ENCODE measurements at regions of chr7 and their contacts with region 1.

Region 1: GRCh38 chr7:117759950-117760640 is 113.1 kb downstream of the CTTNBP2 start:
- DNase-seq: no peak
- H3K4me3 ChIP-seq: no peak overlapping the region
- H3K27ac ChIP-seq: no peak overlapping the region
- H3K4me1 ChIP-seq: no peaks in the 10 kb centered on the region
- H3K27me3 ChIP-seq: no peaks in the 10 kb centered on the region
- CTCF ChIP-seq: no peak
- EP300 ChIP-seq: no peak
- POLR2A ChIP-seq: no peak

Region 2: GRCh38 chr7:117808341-117808757 is 48.3 kb after region 1 on chr7:
- in situ Hi-C with region 1: no loop called
- intact Hi-C with region 1: loop called (anchors 1 kb)
- DNase-seq: no peak
- H3K4me3 ChIP-seq: no peak overlapping the region
- H3K27ac ChIP-seq: no peak overlapping the region
- H3K4me1 ChIP-seq: peaks cover 0 to 21% (median 0%) of the 10 kb centered on the region in 4 donors
- H3K27me3 ChIP-seq: no peaks in the 10 kb centered on the region
- CTCF ChIP-seq: no peak
- EP300 ChIP-seq: no peak
- POLR2A ChIP-seq: no peak